Naive thymus-derived CD4-positive, alpha-beta T cell (primary cell): ENCODE measurements at regions of chr19 and their contacts with region 1.

Region 1: GRCh38 chr19:55407800-55408532 is 378 bp upstream of the UBE2S start:
- DNase-seq: peak; percentile 94 to 99 (median 97)
- ATAC-seq: peak; percentile 93
- H3K4me3 ChIP-seq: peak overlapping the region; percentile 89
- H3K4me3 Mint-ChIP-seq: peak overlapping the region; percentile 86 to 97 (median 92)
- H3K27ac ChIP-seq: peak overlapping the region; percentile 96
- H3K27ac Mint-ChIP-seq: peak overlapping the region; percentile 93 to 100 (median 99)
- H3K4me1 ChIP-seq: peaks cover 17 to 24% of the 10 kb centered on the region in 2 donors
- H3K4me1 Mint-ChIP-seq: peaks cover 21 to 36% (median 26%) of the 10 kb centered on the region in 7 donors
- H3K27me3 ChIP-seq: no peaks in the 10 kb centered on the region
- H3K27me3 Mint-ChIP-seq: peaks cover 0 to 12% (median 0%) of the 10 kb centered on the region in 5 donors

Region 2: GRCh38 chr19:55178781-55179599 is 229.0 kb before region 1 on chr19:
- CTCF ChIA-PET with region 1: no interaction called
- POLR2A ChIA-PET with region 1: no interaction called
- intact Hi-C with region 1: loop called in 1 of 2 experiments (anchors 1 kb)
- DNase-seq: peak; percentile 87 to 98 (median 92)
- ATAC-seq: peak; percentile 93
- H3K4me3 ChIP-seq: peak overlapping the region; percentile 64
- H3K4me3 Mint-ChIP-seq: peak overlapping the region; percentile 49 to 85 (median 82)
- H3K27ac ChIP-seq: peak overlapping the region; percentile 41
- H3K27ac Mint-ChIP-seq: peak overlapping the region; percentile 38 to 94 (median 86)
- H3K4me1 ChIP-seq: peaks cover 15 to 32% of the 10 kb centered on the region in 2 donors
- H3K4me1 Mint-ChIP-seq: peaks cover 9 to 36% (median 26%) of the 10 kb centered on the region in 7 donors
- H3K27me3 ChIP-seq: peaks cover 13 to 50% of the 10 kb centered on the region in 2 donors
- H3K27me3 Mint-ChIP-seq: peaks cover 63 to 79% (median 67%) of the 10 kb centered on the region in 5 donors

Region 3: GRCh38 chr19:55301459-55302317 is 106.3 kb before region 1 on chr19:
- CTCF ChIA-PET with region 1: interaction called, 3 read pairs
- POLR2A ChIA-PET with region 1: interaction called, 7 read pairs
- intact Hi-C with region 1: loop called in 1 of 2 experiments (anchors 5 kb)
- DNase-seq: peak; percentile 84 to 97 (median 91)
- ATAC-seq: peak; percentile 97
- H3K4me3 ChIP-seq: peak overlapping the region; percentile 61
- H3K4me3 Mint-ChIP-seq: peak overlapping the region; percentile 77 to 97 (median 88)
- H3K27ac ChIP-seq: peak overlapping the region; percentile 66
- H3K27ac Mint-ChIP-seq: peak overlapping the region; percentile 66 to 95 (median 84)
- H3K4me1 ChIP-seq: peaks cover 5 to 10% of the 10 kb centered on the region in 2 donors
- H3K4me1 Mint-ChIP-seq: peaks cover 0 to 17% (median 11%) of the 10 kb centered on the region in 7 donors
- H3K27me3 ChIP-seq: no peaks in the 10 kb centered on the region
- H3K27me3 Mint-ChIP-seq: peaks cover 0 to 3% (median 0%) of the 10 kb centered on the region in 5 donors

Region 4: GRCh38 chr19:55461259-55461973 is 53.5 kb after region 1 on chr19 and contains the start of gene ISOC2:
- CTCF ChIA-PET with region 1: no interaction called
- POLR2A ChIA-PET with region 1: interaction called, 6 read pairs
- intact Hi-C with region 1: loop called (anchors 1 to 2 kb)
- DNase-seq: peak; percentile 99 to 100 (median 100)
- ATAC-seq: peak; percentile 98
- H3K4me3 ChIP-seq: peak within 1 kb of the TSS; percentile 91
- H3K4me3 Mint-ChIP-seq: peak within 1 kb of the TSS; percentile 86 to 99 (median 92)
- H3K27ac ChIP-seq: peak within 1 kb of the TSS; percentile 79
- H3K27ac Mint-ChIP-seq: peak within 1 kb of the TSS; percentile 68 to 94 (median 90)
- H3K4me1 ChIP-seq: peaks cover 4 to 12% of the 10 kb centered on the region in 2 donors
- H3K4me1 Mint-ChIP-seq: peaks cover 14 to 33% (median 20%) of the 10 kb centered on the region in 7 donors
- H3K27me3 ChIP-seq: no peaks in the 10 kb centered on the region
- H3K27me3 Mint-ChIP-seq: peaks cover 0 to 2% (median 0%) of the 10 kb centered on the region in 5 donors
- total RNA-seq, gene ISOC2: 5.1 to 20.1 (median 11.3) TPM

Region 5: DNA sequence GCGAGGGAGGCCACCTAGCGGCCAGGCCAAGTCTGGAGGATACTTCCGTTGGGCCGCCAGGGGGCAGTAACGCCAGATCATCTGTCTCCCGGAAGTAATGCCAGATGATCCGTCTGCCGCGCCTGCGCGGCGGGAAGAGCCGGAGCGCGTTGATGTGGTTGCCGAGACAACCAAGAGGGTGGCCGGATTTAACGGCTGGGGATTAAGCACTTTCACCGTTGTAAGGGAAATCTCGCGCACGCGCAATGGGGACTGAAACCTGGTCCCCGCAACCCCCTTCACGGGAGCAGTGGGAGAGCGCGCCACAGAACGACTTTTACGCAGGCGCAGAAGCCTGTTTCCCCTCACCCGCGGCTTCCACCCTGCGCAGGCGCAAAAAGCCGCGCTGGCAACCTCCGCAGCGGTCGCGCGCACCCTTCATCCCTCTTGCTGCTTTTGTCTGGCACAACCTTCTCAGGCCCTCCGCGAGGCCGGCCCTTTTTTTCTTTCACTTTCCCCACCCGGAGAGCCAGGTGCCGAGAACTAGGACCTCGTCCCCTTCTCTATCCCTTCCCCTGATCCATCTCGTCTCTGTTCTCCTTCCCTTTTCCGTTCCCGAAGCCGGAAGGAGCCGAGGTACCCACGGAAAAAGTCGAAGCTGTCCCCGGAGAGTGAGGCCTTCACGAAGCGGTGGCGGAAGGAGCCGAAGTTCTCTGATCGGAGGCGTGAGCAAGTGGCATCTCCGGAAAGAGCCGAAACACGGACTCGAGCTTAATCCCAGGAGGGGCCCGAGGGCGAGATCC is 246.0 kb after region 1 on chr19:
- CTCF ChIA-PET with region 1: no interaction called
- POLR2A ChIA-PET with region 1: no interaction called
- intact Hi-C with region 1: loop called in 1 of 2 experiments (anchors 5 kb)
- DNase-seq: peak; percentile 95 to 100 (median 100)
- ATAC-seq: peak; percentile 83
- H3K4me3 ChIP-seq: peak overlapping the region; percentile 98
- H3K4me3 Mint-ChIP-seq: peak overlapping the region; percentile 83 to 99 (median 96)
- H3K27ac ChIP-seq: peak overlapping the region; percentile 99
- H3K27ac Mint-ChIP-seq: peak overlapping the region; percentile 95 to 100 (median 99)
- H3K4me1 ChIP-seq: peaks cover 30 to 36% of the 10 kb centered on the region in 2 donors
- H3K4me1 Mint-ChIP-seq: peaks cover 29 to 55% (median 39%) of the 10 kb centered on the region in 7 donors
- H3K27me3 ChIP-seq: no peaks in the 10 kb centered on the region
- H3K27me3 Mint-ChIP-seq: peaks cover 0 to 2% (median 0%) of the 10 kb centered on the region in 5 donors